Left cardiac atrium (tissue), 4 donors: ENCODE measurements at regions of chr20 and their contacts with region 1.

Region 1: GRCh38 chr20:23065266-23066044 is 16.0 kb upstream of the THBD start:
- DNase-seq: no peak
- ATAC-seq: no peak

Region 2: DNA sequence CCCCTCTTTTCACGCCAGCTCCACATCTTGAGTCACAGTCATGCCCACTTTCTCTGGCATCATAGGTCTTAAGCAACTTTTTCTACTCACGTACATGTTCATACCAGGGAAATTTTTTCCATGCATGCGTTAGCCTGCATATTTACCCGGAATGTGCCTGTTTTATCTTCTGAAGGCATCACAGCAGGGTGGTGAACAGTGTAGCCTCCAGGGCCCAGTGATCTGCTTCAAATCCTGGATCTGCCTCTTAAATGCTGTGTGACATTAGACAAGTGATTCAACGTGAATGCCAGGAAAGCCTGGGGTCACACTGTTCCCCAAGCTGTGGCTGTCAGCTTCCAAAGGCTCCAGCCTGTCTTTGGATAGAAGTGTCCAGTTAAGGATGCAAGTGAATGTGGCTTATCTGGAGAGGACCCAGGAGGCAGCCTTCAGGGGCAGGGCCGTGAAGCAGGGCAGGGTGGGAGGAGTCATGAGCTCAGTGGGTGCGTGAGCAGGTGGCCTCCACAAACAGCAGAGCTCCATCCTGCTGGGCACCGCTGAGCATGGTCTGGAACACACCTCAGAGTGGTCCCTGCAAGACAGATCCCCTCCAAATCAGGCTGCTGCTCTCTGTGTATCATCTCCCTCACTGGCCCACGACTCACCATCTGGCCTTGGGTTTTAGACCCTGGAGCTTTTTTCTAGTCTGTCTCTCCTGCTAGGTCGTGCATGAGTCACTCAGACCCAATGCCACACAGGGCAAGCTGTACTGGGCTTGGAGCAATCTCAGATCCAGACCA is 51.0 kb after region 1 on chr20:
- intact Hi-C with region 1: loop called in 1 of 2 experiments (anchors 5 kb)
- DNase-seq: no peak
- ATAC-seq: no peak